Natural killer cell (primary cell): ENCODE measurements at regions of chr3 and their contacts with region 1.

Region 1: GRCh38 chr3:127544192-127544802 is 46.2 kb downstream of the TPRA1 start:
- DNase-seq: peak; percentile 48 to 80
- ATAC-seq: peak; percentile 41 to 60 (median 50)
- H3K4me3 ChIP-seq: no peak overlapping the region
- H3K4me3 Mint-ChIP-seq: no peak overlapping the region
- H3K27ac ChIP-seq: no peak overlapping the region
- H3K27ac Mint-ChIP-seq: no peak overlapping the region
- H3K4me1 ChIP-seq: peaks cover 15% of the 10 kb centered on the region
- H3K4me1 Mint-ChIP-seq: peaks cover 6 to 15% of the 10 kb centered on the region in 2 donors
- H3K27me3 ChIP-seq: no peaks in the 10 kb centered on the region
- H3K27me3 Mint-ChIP-seq: peaks cover 0 to 2% of the 10 kb centered on the region in 2 donors
- CTCF ChIP-seq: peak; percentile 75

Region 2: DNA sequence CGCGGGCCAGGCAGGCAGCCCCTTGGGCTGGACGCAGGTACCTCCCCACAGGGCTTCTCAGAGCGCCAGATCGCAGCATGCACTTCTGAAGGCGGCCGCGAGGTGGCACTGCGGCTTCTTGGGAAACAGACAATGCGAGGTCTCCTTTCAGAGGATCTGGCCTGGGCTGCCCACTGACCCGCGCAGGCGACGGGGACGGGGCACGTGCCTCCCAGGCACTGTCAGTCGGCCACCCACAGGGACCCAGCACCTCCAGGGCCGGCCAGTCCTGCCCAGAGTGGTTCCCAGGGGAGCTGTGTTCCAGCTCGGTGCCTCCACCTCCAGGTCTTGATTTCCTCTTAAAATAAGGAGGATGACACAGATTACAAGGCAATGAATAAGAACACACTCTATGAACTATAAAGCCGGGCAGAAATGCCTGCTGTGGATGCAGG is 865.0 kb before region 1 on chr3:
- intact Hi-C with region 1: loop called (anchors 2 kb)
- DNase-seq: peak; percentile 76 to 81
- ATAC-seq: peak; percentile 77 to 95 (median 95)
- H3K4me3 ChIP-seq: no peak overlapping the region
- H3K4me3 Mint-ChIP-seq: no peak overlapping the region
- H3K27ac ChIP-seq: no peak overlapping the region
- H3K27ac Mint-ChIP-seq: no peak overlapping the region
- H3K4me1 ChIP-seq: peaks cover 10% of the 10 kb centered on the region
- H3K4me1 Mint-ChIP-seq: peaks cover 7% of the 10 kb centered on the region in 2 donors
- H3K27me3 ChIP-seq: peaks cover 11% of the 10 kb centered on the region
- H3K27me3 Mint-ChIP-seq: peaks cover 22 to 50% of the 10 kb centered on the region in 2 donors
- CTCF ChIP-seq: peak; percentile 99

Region 3: GRCh38 chr3:126752303-126752842 is 791.9 kb before region 1 on chr3:
- intact Hi-C with region 1: loop called (anchors 5 kb)
- DNase-seq: peak; percentile 28 to 61
- ATAC-seq: peak in 2 of 3 donors; percentile 68 to 78
- H3K4me3 ChIP-seq: no peak overlapping the region
- H3K4me3 Mint-ChIP-seq: no peak overlapping the region
- H3K27ac ChIP-seq: no peak overlapping the region
- H3K27ac Mint-ChIP-seq: no peak overlapping the region
- H3K4me1 ChIP-seq: peaks cover 9% of the 10 kb centered on the region
- H3K4me1 Mint-ChIP-seq: peaks cover 10 to 18% of the 10 kb centered on the region in 2 donors
- H3K27me3 ChIP-seq: no peaks in the 10 kb centered on the region
- H3K27me3 Mint-ChIP-seq: no peaks in the 10 kb centered on the region
- CTCF ChIP-seq: peak; percentile 46

Region 4: DNA sequence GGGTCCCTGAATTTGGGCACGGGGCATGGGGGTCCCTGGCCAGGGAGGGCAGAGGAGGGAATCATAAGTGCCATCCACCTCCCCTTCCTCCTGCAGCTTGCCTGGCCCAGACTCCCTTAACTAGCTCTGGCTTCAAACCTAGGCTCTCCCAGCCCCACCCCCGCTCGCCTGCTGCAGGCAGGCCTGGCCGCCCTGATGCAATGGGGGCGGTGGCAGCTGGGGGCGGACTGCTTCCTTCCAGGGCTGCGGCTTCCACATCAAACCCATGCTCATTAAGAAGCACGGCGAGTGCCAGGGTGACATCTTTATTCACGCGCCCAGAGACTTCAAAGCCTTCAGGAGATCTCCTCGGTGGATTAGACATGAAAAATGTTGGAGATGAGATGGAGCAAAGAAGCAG is 76.9 kb before region 1 on chr3:
- intact Hi-C with region 1: no loop called
- DNase-seq: no peak
- ATAC-seq: no peak
- H3K4me3 ChIP-seq: no peak overlapping the region
- H3K4me3 Mint-ChIP-seq: no peak overlapping the region
- H3K27ac ChIP-seq: no peak overlapping the region
- H3K27ac Mint-ChIP-seq: no peak overlapping the region
- H3K4me1 ChIP-seq: no peaks in the 10 kb centered on the region
- H3K4me1 Mint-ChIP-seq: peaks cover 0 to 4% of the 10 kb centered on the region in 2 donors
- H3K27me3 ChIP-seq: no peaks in the 10 kb centered on the region
- H3K27me3 Mint-ChIP-seq: peaks cover 3 to 11% of the 10 kb centered on the region in 2 donors
- CTCF ChIP-seq: no peak